Astrocyte of the cerebellum (primary cell): ENCODE measurements at regions of chr15 and their contacts with region 1.

Region 1: GRCh38 chr15:66063147-66063546 is 190.4 kb downstream of the MEGF11 start:
- DNase-seq: no peak
- H3K4me3 ChIP-seq: no peak overlapping the region
- CTCF ChIP-seq: no peak

Region 2: DNA sequence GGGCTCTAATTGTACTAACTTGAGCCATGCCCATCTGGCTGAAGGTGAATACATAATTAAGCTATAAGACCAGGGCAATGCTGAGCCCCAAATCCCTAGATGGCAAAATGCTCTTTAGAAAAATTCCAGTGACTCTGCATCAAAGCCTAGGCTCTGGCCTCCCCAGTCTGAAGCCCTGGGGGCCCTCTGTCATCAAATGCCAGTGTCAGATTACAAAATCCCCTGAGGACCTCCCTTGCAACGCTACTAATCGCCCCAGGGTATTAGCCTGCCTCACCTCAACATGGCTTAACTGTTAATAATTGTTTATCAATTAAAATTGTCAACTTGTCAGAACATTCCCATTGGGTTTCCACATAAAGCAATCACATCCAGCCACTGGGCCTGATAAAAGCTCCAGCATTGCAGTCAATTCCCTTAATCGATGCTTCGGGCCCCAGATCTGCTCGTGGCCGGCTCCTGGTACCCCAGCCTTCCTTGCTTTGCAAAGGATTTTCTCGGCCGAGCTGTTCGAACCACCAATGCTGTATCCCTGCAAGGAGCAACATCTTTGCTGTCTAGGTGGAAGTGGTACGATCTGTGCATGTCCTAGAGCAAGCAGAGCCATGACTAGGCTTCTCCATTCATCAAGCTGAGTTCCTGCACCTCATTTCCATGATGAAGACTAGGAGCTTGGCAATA is 38.7 kb after region 1 on chr15:
- in situ Hi-C with region 1: loop called (anchors 5 kb)
- DNase-seq: no peak
- H3K4me3 ChIP-seq: no peak overlapping the region
- CTCF ChIP-seq: no peak

Region 3: GRCh38 chr15:66144978-66145730 is 82.0 kb after region 1 on chr15:
- in situ Hi-C with region 1: loop called (anchors 5 kb)
- DNase-seq: no peak
- H3K4me3 ChIP-seq: no peak overlapping the region
- CTCF ChIP-seq: no peak